ENCODE measurements at regions of chr9 and their contacts with region 1.

Region 1: GRCh38 chr9:68779558-68780384 is 74.7 kb downstream of the PIP5K1B start:
- DNase-seq: peak; percentile 96
- ATAC-seq: peak; percentile 91
- H3K4me3 Mint-ChIP-seq: no peak overlapping the region
- H3K27ac Mint-ChIP-seq: no peak overlapping the region
- H3K4me1 Mint-ChIP-seq: peaks cover 7% of the 10 kb centered on the region
- H3K27me3 Mint-ChIP-seq: no peaks in the 10 kb centered on the region
- CTCF ChIP-seq: no peak

Region 2: DNA sequence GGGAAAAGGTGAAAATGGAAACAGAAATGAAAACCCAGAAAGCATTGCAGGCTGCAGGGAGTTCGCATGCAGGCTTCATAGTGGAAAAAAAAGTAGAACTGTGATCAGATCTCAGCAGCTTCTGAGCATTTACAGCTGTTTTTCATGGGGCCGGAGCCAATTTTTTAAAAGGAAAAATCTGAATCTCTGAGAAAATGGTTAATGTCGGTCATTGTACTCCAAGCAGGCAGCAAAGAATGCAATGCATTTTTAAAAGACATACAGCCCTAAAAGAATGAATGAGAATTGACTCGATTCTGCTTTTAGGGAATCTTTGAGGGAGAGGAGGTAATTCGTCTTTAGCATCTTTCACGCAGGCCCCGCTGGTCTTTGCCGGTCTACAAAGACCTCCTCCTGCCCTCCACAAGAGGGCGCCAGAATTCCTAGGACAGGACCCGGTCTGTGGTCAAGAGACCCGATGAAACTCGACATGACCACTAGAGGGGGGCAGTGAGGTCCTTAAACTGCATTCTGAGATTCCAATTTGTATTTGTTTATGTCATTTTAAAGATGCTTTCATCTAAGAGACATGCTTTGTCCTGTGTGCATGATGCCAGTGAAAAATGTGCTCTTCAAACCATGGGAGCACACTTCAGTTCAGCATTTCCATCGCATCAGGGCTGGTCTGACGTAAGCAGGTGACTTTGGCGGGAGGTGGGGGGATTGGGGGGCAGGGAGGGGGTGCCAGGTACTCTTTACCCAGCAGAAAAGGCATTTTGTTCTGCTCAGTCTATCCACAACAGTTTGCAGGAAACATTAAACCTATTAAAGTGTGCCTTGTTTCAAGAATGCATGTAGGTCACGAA is 195.4 kb before region 1 on chr9:
- CTCF ChIA-PET with region 1: interaction called, 14 read pairs
- POLR2A ChIA-PET with region 1: no interaction called
- DNase-seq: peak; percentile 82
- ATAC-seq: peak; percentile 93
- H3K4me3 Mint-ChIP-seq: peak overlapping the region; percentile 48
- H3K27ac Mint-ChIP-seq: peak overlapping the region; percentile 66; the same call in 1 of the 2 replicates
- H3K4me1 Mint-ChIP-seq: peaks cover 8% of the 10 kb centered on the region
- H3K27me3 Mint-ChIP-seq: peaks cover 4% of the 10 kb centered on the region
- CTCF ChIP-seq: peak; percentile 95

Region 3: GRCh38 chr9:68750786-68751185 is 29.0 kb before region 1 on chr9:
- CTCF ChIA-PET with region 1: no interaction called
- POLR2A ChIA-PET with region 1: no interaction called
- DNase-seq: no peak
- ATAC-seq: peak; percentile 21; the same call in 1 of the 2 replicates
- H3K4me3 Mint-ChIP-seq: no peak overlapping the region
- H3K27ac Mint-ChIP-seq: no peak overlapping the region
- H3K4me1 Mint-ChIP-seq: peaks cover 27% of the 10 kb centered on the region
- H3K27me3 Mint-ChIP-seq: no peaks in the 10 kb centered on the region
- CTCF ChIP-seq: no peak

Measured in WTC11 (cell line).